Activated CD8-positive, alpha-beta T cell treated with anti-CD3 and anti-CD28 coated beads, Interleukin-2, amount 10 ng/mL, durations not matched to agents 7 days and 5 days (primary cell): ENCODE measurements at regions of chr10 and their contacts with region 1.

Region 1: DNA sequence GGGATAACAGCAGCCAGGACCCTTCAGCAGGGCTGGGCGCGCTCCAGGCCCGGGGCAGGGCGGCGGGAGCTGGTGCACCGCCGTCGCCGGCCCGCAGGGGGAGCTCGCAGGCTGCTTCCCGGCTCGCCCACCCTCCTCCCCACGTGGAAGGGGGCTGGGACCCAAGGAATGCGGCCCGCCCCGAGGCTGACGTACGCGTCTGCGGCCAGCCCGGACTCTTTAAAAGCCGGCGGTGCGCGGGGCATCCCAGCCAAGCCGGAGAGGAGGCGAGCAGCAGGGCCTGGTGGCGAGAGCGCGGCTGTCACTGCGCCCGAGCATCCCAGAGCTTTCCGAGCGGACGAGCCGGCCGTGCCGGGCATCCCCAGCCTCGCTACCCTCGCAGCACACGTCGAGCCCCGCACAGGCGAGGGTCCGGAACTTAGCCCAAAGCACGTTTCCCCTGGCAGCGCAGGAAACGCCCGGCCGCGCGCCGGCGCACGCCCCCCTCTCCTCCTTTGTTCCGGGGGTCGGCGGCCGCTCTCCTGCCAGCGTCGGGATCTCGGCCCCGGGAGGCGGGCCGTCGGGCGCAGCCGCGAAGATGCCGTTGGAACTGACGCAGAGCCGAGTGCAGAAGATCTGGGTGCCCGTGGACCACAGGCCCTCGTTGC is at the start of gene PFKFB3:
- DNase-seq: peak; percentile 95
- ATAC-seq: peak; percentile 66
- H3K4me3 Mint-ChIP-seq: peak within 1 kb of the TSS; percentile 100
- H3K27ac Mint-ChIP-seq: peak within 1 kb of the TSS; percentile 96
- H3K4me1 Mint-ChIP-seq: peaks cover 44% of the 10 kb centered on the region
- H3K27me3 Mint-ChIP-seq: no peaks in the 10 kb centered on the region
- total RNA-seq, gene PFKFB3: 93.0 to 97.3 TPM

Region 2: DNA sequence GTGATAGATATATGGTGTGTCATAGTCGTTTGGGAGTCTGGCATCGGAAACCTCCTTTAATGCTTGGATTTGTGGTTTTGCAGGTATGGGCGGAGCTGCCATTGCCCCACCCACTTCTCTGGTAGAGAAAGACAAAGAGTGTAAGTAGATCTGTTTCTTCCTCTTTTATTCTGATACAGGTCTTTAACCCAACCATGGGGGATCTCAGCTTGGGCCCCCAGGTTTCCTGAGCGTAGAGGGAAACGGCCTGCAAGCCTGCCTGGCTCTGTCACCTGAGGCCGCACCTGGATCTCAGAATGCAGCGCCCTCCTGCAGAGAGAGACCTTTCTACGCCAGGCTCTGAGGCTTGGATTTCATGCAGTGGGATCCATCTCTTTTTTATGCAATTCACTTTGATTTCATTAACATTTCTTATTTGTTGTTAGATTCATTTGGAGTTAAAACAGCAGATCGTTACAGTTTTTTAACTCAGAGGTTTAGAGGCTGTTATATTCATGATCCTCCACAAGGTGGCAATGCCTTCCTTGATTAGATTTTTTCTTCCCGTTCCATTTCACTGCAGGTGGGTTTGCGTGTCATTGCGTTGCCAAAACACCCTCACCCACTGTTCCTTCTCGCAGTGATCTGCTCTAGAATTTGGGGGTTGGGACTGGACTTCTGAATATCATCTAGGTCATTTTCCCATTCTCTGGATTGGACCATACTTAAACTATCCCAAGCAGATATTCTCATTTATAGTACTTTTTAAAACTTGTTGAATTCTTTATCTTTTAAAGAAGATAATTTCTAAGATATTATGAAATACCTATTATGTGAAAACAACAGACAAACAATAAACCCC is 94.0 kb before region 1 on chr10:
- CTCF ChIA-PET with region 1: interaction called, 11 read pairs
- POLR2A ChIA-PET with region 1: interaction called, 3 read pairs
- DNase-seq: peak; percentile 52
- ATAC-seq: peak; percentile 54
- H3K4me3 Mint-ChIP-seq: no peak overlapping the region
- H3K27ac Mint-ChIP-seq: peak overlapping the region; percentile 81
- H3K4me1 Mint-ChIP-seq: peaks cover 38% of the 10 kb centered on the region
- H3K27me3 Mint-ChIP-seq: no peaks in the 10 kb centered on the region

Region 3: GRCh38 chr10:6151087-6151977 is 51.5 kb before region 1 on chr10:
- CTCF ChIA-PET with region 1: interaction called, 16 read pairs
- POLR2A ChIA-PET with region 1: interaction called, 6 read pairs
- DNase-seq: peak; percentile 73
- ATAC-seq: peak; percentile 84
- H3K4me3 Mint-ChIP-seq: peak overlapping the region; percentile 67
- H3K27ac Mint-ChIP-seq: peak overlapping the region; percentile 86
- H3K4me1 Mint-ChIP-seq: peaks cover 62% of the 10 kb centered on the region
- H3K27me3 Mint-ChIP-seq: no peaks in the 10 kb centered on the region

Region 4: DNA sequence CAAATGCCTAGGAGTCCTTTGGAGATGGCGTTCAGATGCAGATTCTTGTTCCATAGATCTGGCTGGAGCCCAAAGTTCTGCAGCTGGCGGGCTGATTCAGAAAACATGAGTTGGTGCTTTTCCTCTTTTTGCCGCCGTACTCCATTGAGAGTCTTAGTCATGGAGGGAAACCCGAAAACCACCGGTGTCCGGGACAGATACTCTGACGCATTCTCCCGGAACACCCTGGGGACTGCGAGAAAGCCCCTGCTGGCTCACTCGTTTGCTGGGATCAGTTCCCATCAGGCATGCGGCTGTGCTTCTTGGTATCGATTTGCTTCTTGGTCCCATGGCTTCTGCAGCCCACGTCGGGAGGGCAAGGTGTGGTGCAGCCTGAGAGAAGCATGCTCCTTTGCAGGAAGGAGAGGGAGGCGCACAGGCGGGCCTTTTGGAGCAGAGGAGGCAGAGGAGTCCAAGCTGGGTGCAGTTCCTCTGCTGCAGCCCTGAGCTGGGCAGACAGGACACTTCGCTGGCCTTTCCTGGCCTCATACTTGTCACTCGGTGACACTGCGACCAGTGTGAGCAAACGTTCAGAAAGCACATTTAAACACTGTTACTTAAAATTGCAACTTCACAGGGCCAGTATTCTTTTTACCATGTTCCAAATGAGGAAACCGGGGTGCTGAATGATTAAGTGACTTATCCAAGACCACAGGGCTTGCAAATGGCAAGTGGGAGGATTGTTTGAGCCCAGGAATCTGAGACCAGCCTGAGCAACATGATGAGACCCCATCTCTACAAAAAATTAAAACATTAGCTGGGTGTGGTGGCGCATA is 30.7 kb before region 1 on chr10:
- CTCF ChIA-PET with region 1: interaction called, 93 read pairs
- POLR2A ChIA-PET with region 1: interaction called, 13 read pairs
- DNase-seq: no peak
- ATAC-seq: no peak
- H3K4me3 Mint-ChIP-seq: no peak overlapping the region
- H3K27ac Mint-ChIP-seq: peak overlapping the region; percentile 75
- H3K4me1 Mint-ChIP-seq: peaks cover 71% of the 10 kb centered on the region
- H3K27me3 Mint-ChIP-seq: no peaks in the 10 kb centered on the region

Region 5: GRCh38 chr10:6382081-6382480 is 179.3 kb after region 1 on chr10:
- CTCF ChIA-PET with region 1: interaction called, 11 read pairs
- POLR2A ChIA-PET with region 1: interaction called, 5 read pairs
- DNase-seq: peak; percentile 51
- ATAC-seq: peak; percentile 75
- H3K4me3 Mint-ChIP-seq: peak overlapping the region; percentile 60
- H3K27ac Mint-ChIP-seq: peak overlapping the region; percentile 73
- H3K4me1 Mint-ChIP-seq: peaks cover 37% of the 10 kb centered on the region
- H3K27me3 Mint-ChIP-seq: no peaks in the 10 kb centered on the region

Region 6: DNA sequence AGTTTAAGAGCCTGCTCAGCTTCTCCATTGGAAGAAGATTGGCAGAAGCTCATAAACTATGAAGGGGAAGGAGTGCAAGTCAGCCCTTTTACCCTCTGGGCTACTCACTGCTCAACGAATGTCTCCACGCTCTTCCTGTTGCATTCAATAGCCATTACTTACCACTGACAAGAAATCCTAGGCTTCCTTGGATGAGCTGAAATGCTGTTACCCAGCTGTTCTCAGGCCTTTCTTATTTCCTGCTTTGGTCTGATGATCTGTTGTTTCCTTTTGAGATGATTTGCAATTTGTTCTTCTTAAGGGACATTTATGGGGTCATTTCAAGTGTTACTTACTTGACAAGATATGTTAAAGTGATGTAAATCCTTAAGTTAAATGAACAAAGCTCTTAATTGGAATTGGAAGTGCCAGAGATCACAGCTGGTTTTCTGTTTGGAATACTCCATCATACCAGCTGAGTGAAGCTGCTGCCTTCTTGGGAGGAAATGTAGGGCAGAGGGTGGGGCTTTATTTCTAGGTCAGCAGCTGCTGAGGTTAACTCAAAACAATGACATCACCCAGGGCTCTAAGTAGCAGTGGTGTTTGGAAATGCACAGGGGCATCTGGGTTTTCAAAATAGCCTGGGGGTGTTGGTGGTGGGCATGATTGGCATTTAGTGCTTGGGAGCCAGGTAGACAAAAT is 207.3 kb after region 1 on chr10:
- CTCF ChIA-PET with region 1: interaction called, 83 read pairs
- POLR2A ChIA-PET with region 1: interaction called, 14 read pairs
- DNase-seq: peak; percentile 73
- ATAC-seq: peak; percentile 90
- H3K4me3 Mint-ChIP-seq: peak overlapping the region; percentile 63
- H3K27ac Mint-ChIP-seq: peak overlapping the region; percentile 83
- H3K4me1 Mint-ChIP-seq: peaks cover 45% of the 10 kb centered on the region
- H3K27me3 Mint-ChIP-seq: no peaks in the 10 kb centered on the region

Region 7: DNA sequence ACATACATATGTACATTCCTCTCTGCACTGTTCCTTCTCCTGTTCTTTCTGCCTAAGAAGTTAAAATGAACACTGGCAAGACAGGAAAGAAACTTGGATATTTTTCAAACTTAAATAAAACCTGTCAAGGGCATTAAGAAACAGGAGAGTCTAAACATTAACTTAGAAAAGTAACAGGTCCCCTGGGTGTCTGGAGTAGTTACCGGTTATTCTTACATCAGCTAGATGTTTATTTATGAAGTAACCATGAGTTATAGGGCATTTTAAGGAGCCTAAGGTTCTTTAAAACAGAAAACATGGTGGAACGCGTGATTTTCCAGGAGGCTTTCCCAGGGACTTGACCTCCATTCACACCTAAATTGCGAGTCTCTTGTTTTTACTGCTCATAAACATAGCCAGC is 229.1 kb after region 1 on chr10:
- CTCF ChIA-PET with region 1: no interaction called
- POLR2A ChIA-PET with region 1: no interaction called
- DNase-seq: no peak
- ATAC-seq: no peak
- H3K4me3 Mint-ChIP-seq: no peak overlapping the region
- H3K27ac Mint-ChIP-seq: no peak overlapping the region
- H3K4me1 Mint-ChIP-seq: no peaks in the 10 kb centered on the region
- H3K27me3 Mint-ChIP-seq: no peaks in the 10 kb centered on the region

Region 8: GRCh38 chr10:6473901-6474370 is 271.1 kb after region 1 on chr10:
- CTCF ChIA-PET with region 1: no interaction called
- POLR2A ChIA-PET with region 1: no interaction called
- DNase-seq: peak; percentile 59
- ATAC-seq: peak; percentile 86
- H3K4me3 Mint-ChIP-seq: peak overlapping the region; percentile 90
- H3K27ac Mint-ChIP-seq: peak overlapping the region; percentile 99
- H3K4me1 Mint-ChIP-seq: peaks cover 64% of the 10 kb centered on the region
- H3K27me3 Mint-ChIP-seq: no peaks in the 10 kb centered on the region